Activated CD4-positive, alpha-beta memory T cell treated with anti-CD3 and anti-CD28 coated beads, Interleukin-2, amount 10 ng/mL, durations not matched to agents 7 days and 5 days (primary cell): ENCODE measurements at regions of chr5 and their contacts with region 1.

Region 1: GRCh38 chr5:116825486-116825885 is 250.9 kb upstream of the SEMA6A start:
- DNase-seq: no peak
- H3K4me3 Mint-ChIP-seq: no peak overlapping the region
- H3K27ac Mint-ChIP-seq: no peak overlapping the region
- H3K4me1 Mint-ChIP-seq: no peaks in the 10 kb centered on the region
- H3K27me3 Mint-ChIP-seq: no peaks in the 10 kb centered on the region

Region 2: DNA sequence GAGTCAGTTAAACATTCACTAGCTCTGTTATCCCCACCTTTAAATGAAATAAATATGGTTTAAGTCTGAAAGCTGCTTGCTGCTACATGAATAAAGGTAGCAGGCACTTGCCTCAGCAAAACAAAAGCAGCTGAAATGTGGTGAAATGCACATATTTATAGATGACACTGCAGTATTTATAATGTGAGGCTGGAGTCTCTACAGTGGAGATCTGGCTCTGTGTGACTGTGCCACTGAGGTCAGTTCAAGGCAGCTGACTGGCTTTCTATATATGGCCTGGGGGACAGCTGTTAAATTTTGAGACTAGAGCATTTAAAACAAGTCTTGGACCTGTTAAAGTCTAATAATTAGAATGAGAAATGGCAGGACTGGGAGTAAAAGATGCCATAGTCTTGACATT is 608.8 kb after region 1 on chr5:
- CTCF ChIA-PET with region 1: interaction called, 10 read pairs
- POLR2A ChIA-PET with region 1: no interaction called
- DNase-seq: no peak
- H3K4me3 Mint-ChIP-seq: no peak overlapping the region
- H3K27ac Mint-ChIP-seq: no peak overlapping the region
- H3K4me1 Mint-ChIP-seq: no peaks in the 10 kb centered on the region
- H3K27me3 Mint-ChIP-seq: no peaks in the 10 kb centered on the region